ENCODE measurements at regions of chr22 and their contacts with region 1.

Region 1: DNA sequence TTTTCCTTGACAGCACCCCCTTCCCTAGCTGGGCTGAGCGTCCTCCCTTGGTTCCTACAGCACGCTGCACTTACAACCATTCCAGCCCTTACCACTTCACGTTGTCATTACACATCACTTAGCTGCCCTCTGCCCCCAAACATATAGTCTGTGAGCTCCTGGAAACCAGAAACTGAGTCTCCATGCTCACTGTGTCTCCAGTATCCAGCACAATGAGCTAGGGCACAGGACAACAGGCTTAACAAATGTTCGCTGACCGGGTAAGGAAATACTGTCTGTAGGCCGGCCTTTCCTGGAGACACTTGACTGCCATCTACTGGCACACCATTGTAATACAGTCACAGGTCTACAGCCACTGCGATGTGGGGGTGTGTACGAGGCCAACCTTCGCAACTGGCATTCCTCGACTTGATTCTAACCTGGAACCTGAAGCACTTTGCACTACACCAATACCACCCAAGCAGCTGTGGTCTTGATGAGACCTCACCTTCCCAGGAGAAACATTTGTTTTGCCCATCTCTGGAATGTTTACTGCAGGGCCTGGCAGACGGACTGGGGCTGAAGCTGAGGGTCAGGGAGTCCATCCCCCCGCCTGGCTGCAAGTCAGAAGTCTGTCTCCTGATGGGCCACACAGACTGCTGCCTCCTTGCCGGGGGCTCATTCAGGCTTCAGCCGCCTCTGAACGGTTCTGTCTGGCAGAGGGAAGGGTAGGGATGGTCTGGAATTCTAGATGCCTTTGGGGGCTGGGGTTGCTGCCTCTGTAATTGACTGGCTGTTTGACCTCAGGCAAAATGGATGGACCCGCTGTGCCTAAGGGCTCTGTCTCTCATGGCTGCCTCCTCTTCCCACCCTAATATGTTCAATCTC is 72.0 kb downstream of the SYN3 start:
- DNase-seq: peak; percentile 7 to 41 (median 37)
- H3K4me3 ChIP-seq: no peak overlapping the region
- H3K4me3 Mint-ChIP-seq: no peak overlapping the region
- H3K27ac ChIP-seq: no peak overlapping the region
- H3K27ac Mint-ChIP-seq: no peak overlapping the region
- H3K4me1 ChIP-seq: no peaks in the 10 kb centered on the region
- H3K4me1 Mint-ChIP-seq: no peaks in the 10 kb centered on the region
- H3K27me3 ChIP-seq: no peaks in the 10 kb centered on the region
- H3K27me3 Mint-ChIP-seq: peaks cover 2 to 8% (median 2%) of the 10 kb centered on the region in 3 donors
- CTCF ChIP-seq: peak; percentile 73

Region 2: DNA sequence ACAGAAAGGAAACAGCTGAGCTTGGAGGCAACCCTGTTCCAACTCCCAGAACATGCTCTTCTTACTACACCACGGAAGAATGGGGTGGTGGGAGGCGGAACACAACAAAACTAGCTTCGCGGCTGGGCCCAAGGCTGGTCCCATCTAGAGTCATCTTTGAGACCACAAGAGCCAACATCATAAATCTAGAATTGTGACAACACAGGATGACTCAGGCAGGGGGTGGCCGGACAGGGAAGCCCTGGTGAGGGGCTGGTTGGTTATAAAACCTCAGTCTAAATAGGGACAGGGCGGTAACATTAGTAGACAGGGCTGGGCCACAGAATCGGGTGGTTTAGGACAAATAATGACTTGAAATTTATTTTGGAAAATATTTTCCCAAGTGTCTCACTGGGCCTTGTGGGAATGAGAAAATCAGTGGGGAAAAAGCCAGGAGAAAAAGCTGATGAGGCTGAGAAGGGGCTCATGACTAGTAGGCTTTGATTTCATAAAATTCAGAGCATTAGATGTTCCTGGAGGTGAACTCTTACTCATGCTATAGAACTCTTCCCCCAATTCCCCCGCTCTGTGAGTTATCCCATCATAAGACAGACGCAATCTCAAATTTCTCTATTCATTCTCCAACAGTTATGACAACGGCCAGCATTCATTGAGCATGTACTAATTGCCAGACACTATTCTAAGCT is 336.5 kb before region 1 on chr22:
- intact Hi-C with region 1: loop called in 1 of 2 experiments (anchors 10 kb)
- DNase-seq: peak in 2 of 3 donors; percentile 8 to 24
- H3K4me3 ChIP-seq: no peak overlapping the region
- H3K4me3 Mint-ChIP-seq: no peak overlapping the region
- H3K27ac ChIP-seq: no peak overlapping the region
- H3K27ac Mint-ChIP-seq: peak overlapping the region in 1 of 7 donors; percentile 23
- H3K4me1 ChIP-seq: peaks cover 2 to 3% of the 10 kb centered on the region in 2 donors
- H3K4me1 Mint-ChIP-seq: peaks cover 9% of the 10 kb centered on the region
- H3K27me3 ChIP-seq: no peaks in the 10 kb centered on the region
- H3K27me3 Mint-ChIP-seq: peaks cover 0 to 4% (median 1%) of the 10 kb centered on the region in 3 donors
- CTCF ChIP-seq: no peak

Region 3: GRCh38 chr22:32836280-32837123 is 149.6 kb before region 1 on chr22:
- intact Hi-C with region 1: no loop called
- DNase-seq: peak in 1 of 3 donors; percentile 3
- H3K4me3 ChIP-seq: no peak overlapping the region
- H3K4me3 Mint-ChIP-seq: no peak overlapping the region
- H3K27ac ChIP-seq: no peak overlapping the region
- H3K27ac Mint-ChIP-seq: no peak overlapping the region
- H3K4me1 ChIP-seq: no peaks in the 10 kb centered on the region
- H3K4me1 Mint-ChIP-seq: no peaks in the 10 kb centered on the region
- H3K27me3 ChIP-seq: no peaks in the 10 kb centered on the region
- H3K27me3 Mint-ChIP-seq: peaks cover 2 to 7% (median 3%) of the 10 kb centered on the region in 3 donors
- CTCF ChIP-seq: peak; percentile 70